ENCODE measurements at regions of chr2 and their contacts with region 1.

Region 1: DNA sequence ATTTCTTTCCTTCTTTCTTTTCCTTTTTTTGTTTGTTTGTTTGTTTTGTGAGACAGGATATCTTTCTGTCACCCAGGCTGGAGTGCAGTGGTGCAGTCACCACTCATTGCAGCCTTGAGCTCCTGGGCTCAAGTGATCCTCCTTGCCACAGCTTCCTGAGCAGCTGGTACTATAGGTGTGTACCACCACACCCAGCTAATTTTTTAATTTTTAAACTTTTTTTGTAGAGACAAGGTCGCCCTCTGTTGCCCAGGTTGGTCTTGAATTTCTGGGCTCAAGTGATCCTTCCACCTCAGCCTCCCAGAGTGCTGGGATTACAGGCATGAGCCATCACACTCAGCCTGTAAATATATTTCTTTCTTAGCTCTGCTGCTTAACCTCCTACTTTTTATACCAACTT is 83.4 kb upstream of the CYP20A1 start:
- DNase-seq: peak; percentile 24
- ATAC-seq: peak; percentile 56
- H3K4me3 ChIP-seq: no peak overlapping the region
- H3K27ac ChIP-seq: no peak overlapping the region
- H3K4me1 ChIP-seq: no peaks in the 10 kb centered on the region
- H3K27me3 ChIP-seq: no peaks in the 10 kb centered on the region
- CTCF ChIP-seq: peak; percentile 45; the same call in 1 of the 2 replicates

Region 2: DNA sequence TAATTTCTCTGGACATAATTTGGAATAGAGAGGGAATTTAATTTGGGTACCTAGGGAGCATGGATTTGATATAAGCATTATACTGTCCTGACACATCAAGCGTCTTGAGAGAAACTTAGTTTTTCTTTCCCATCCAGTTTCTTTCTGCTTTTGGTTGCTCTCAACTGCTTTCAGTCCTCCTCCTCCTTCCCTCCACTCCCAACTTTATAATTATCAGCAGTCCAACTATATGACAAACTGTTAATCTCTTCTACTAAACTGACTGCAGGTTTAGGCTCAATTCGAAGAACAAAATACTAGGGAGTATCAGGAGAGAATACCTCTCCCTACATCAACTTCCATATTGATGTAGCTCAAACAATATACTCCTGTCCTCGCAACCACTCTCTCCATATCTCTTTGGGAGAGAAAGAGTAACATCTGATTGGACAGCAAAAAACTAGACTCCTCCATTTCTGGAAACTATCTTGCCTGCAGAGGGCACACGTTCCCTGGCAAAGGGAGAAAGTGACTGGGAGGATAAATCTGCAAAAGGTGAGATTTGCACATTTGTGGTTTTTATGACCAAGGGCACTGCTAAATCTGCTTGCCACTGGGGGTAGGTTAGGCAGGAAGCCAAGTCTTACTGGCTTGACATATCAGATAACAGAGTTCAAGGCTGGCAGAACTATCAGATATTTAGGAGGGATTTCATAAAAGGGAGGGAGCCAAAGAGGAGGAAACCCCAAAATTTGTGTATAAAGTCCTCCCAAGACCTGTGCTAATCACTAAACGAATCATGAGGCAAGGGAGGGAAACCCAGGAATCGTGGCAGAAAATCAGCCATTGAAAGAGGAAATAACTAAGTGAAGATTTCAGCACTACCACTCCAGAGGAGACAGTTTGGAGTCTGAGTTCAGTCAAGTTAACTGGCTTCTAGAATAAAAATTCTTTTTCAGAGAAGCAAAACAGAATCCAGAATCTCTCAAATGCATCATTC is 323.9 kb before region 1 on chr2:
- CTCF ChIA-PET with region 1: no interaction called
- POLR2A ChIA-PET with region 1: no interaction called
- intact Hi-C with region 1: loop called (anchors 1 kb)
- DNase-seq: peak; percentile 86
- ATAC-seq: peak; percentile 97
- H3K4me3 ChIP-seq: peak overlapping the region; percentile 38
- H3K27ac ChIP-seq: no peak overlapping the region
- H3K4me1 ChIP-seq: peaks cover 6% of the 10 kb centered on the region
- H3K27me3 ChIP-seq: no peaks in the 10 kb centered on the region
- CTCF ChIP-seq: peak; percentile 95

Region 3: DNA sequence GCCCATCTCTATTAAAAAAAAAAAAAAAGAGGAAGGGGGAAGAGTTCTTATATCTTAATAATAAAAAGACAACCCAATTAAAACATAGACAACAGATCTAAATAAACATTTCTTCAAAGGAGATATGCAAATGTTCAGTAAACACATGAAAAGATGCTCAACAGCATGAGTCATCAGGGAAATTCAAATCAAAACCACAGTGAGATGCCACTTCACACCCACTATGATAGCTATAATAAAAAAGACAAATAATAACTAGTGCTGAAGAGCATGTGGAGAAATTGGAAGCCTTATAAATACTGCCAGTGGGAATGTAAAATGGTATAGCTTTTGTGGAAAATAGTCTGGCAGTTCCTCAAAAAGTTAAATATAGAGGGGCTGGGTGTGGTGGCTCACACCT is 22.0 kb after region 1 on chr2:
- CTCF ChIA-PET with region 1: no interaction called
- POLR2A ChIA-PET with region 1: interaction called, 12 read pairs
- intact Hi-C with region 1: no loop called
- DNase-seq: no peak
- ATAC-seq: peak; percentile 46; the same call in 1 of the 2 replicates
- H3K4me3 ChIP-seq: no peak overlapping the region
- H3K27ac ChIP-seq: no peak overlapping the region
- H3K4me1 ChIP-seq: no peaks in the 10 kb centered on the region
- H3K27me3 ChIP-seq: no peaks in the 10 kb centered on the region
- CTCF ChIP-seq: no peak